ENCODE measurements at regions of chr2 and their contacts with region 1.

Region 1: DNA sequence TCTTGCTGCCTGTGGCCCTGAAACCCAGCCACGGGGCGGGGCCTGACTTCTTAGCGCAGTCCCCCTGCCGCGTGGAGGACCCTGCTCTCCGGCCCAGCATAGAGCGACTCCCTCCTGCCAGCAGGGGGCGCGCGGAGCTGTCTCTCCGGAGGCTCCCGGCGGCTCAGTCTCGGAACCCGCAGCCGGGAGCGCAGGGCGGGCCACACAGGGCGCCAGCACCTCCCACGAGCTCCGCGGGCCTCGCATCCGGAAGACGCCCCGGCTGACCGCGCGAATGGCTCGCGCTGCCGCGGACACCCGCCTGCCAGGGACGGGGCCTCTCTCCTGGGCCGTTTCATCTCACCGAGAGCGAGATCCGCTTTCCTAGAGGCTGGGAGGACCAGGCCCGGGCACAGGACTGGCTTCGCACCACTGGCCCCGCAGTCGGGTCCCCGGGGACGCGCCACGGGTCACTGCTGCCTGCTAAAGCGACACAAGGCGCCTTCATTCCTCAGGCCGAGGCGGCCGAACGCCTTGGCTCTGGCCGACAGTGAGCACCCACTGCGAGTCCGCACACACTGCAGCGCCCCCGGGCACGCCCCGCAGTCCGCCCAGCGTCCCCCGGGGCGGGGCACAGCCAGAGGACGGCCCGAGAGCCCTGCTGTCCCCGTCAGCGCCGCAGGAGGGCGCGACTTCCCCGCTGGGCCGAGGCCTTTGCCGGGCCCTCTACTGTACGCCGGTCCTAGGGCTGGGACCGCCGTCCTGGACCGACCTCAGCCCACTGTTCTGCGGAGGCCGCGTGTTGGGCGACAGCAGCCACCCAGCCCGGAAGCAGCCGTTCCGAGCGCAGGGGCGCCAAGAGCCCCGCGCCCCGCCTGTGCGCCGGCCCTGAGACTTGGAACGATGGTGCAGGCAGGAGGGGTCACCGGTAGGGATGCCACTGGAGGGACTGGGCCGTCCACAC is 39.0 kb upstream of the ARHGEF4 start:
- DNase-seq: peak; percentile 93
- H3K4me3 Mint-ChIP-seq: peak overlapping the region; percentile 65
- H3K27ac Mint-ChIP-seq: no peak overlapping the region
- H3K4me1 Mint-ChIP-seq: peaks cover 3% of the 10 kb centered on the region
- H3K27me3 Mint-ChIP-seq: no peaks in the 10 kb centered on the region

Region 2: DNA sequence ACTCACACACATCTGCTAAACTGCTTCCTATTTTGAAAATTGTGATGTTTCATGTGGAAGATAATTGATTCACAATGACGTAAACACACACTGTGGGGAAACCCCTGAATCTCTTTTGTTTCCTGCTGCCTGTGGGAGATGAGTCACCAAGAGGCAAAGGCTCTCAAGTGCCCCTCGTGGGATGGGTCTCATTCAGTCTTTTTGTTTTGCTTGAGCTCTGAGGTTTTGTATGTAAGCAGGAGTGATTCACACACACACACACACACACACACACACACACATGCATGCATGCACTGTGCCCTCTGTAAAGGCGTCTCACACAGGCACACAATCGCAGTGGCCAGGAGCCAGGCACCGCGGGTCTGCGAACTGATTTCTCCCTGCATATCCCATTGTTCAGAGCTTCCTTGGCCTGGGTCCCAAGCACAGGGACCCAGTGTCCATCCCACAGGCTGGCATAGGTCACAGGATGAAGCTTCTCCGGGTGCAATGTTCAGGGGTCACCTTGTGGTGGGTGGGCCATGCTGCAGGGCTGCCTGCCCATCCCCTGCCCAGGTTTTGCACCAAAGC is 26.8 kb after region 1 on chr2:
- CTCF ChIA-PET with region 1: interaction called, 31 read pairs
- POLR2A ChIA-PET with region 1: interaction called, 7 read pairs
- intact Hi-C with region 1: loop called (anchors 1 kb)
- DNase-seq: peak; percentile 83
- H3K4me3 Mint-ChIP-seq: peak overlapping the region; percentile 39
- H3K27ac Mint-ChIP-seq: peak overlapping the region; percentile 90
- H3K4me1 Mint-ChIP-seq: peaks cover 21% of the 10 kb centered on the region
- H3K27me3 Mint-ChIP-seq: no peaks in the 10 kb centered on the region

Region 3: DNA sequence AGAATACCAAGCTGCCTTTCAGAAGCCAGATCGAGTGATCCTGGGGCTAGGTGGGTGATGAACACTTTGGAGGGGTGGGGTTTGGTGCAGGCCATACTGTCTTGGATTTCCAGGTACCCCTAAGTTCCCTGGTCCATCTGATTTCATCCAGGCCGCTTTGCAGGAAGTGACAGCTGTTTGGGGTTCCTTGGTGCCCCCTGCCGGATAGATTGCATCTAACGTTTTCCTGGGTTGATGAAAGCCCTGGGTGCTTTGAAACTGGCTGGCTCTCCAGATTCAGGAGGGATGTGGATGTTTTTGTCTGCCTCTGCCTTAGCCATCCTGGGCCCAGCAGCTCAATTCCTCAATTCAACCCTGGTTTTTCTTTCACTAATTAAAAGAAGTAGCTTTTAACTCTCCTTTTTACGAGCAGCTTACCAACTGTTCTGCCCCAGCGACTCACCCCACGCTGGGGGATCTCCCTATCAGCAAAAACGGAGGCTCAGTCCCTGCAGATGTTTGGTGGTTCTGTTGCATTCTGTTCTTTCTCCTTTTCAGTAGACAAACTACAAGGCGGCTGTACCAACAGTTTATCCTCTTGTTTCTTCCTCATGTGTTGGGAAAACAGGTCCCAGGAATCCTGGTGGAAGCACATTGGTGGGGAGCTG is 76.1 kb after region 1 on chr2:
- CTCF ChIA-PET with region 1: interaction called, 246 read pairs
- POLR2A ChIA-PET with region 1: interaction called, 5 read pairs
- intact Hi-C with region 1: loop called (anchors 1 kb)
- DNase-seq: peak; percentile 83
- H3K4me3 Mint-ChIP-seq: no peak overlapping the region
- H3K27ac Mint-ChIP-seq: no peak overlapping the region
- H3K4me1 Mint-ChIP-seq: no peaks in the 10 kb centered on the region
- H3K27me3 Mint-ChIP-seq: peaks cover 6% of the 10 kb centered on the region

Region 4: DNA sequence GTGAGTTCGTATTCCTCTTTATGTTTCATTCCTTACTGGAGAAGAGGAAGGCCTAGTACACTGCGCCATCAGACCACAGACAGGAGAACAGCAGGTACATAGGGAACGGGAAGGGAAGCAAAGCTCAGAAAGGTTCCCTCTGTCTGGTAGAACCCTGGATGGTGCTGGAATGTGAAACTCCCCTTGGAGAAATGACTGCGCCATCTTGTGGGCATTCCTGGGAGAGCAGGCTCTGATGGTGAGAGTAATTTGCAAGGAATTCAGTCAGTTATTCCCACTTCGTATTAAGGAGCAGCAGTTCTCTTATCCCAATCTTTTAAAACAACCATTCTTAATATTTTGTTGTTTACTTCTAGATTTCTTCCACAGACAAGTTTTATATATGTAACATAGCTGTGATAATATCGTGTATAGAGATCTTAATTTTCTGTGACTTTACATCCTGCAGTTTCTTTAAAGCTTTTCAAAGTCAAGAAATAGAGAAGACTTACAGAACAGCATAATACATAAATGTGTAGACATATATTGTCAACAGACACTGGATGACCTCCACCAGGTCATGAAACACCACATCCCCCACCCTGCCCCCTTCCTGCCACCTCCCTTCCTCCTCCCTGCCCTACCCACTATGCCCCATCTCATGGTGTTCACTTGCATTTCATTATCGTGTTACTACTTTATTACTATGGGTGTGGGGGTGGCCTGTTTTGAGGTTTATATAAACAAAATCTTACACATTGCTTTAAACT is 122.8 kb after region 1 on chr2:
- CTCF ChIA-PET with region 1: interaction called, 76 read pairs
- POLR2A ChIA-PET with region 1: no interaction called
- intact Hi-C with region 1: loop called (anchors 1 kb)
- DNase-seq: peak; percentile 69
- H3K4me3 Mint-ChIP-seq: no peak overlapping the region
- H3K27ac Mint-ChIP-seq: no peak overlapping the region
- H3K4me1 Mint-ChIP-seq: no peaks in the 10 kb centered on the region
- H3K27me3 Mint-ChIP-seq: peaks cover 12% of the 10 kb centered on the region

Measured in activated CD4-positive, alpha-beta memory T cell treated with anti-CD3 and anti-CD28 coated beads for 36 hours (primary cell).